ENCODE measurements at regions of chr12 and their contacts with region 1.

Region 1: DNA sequence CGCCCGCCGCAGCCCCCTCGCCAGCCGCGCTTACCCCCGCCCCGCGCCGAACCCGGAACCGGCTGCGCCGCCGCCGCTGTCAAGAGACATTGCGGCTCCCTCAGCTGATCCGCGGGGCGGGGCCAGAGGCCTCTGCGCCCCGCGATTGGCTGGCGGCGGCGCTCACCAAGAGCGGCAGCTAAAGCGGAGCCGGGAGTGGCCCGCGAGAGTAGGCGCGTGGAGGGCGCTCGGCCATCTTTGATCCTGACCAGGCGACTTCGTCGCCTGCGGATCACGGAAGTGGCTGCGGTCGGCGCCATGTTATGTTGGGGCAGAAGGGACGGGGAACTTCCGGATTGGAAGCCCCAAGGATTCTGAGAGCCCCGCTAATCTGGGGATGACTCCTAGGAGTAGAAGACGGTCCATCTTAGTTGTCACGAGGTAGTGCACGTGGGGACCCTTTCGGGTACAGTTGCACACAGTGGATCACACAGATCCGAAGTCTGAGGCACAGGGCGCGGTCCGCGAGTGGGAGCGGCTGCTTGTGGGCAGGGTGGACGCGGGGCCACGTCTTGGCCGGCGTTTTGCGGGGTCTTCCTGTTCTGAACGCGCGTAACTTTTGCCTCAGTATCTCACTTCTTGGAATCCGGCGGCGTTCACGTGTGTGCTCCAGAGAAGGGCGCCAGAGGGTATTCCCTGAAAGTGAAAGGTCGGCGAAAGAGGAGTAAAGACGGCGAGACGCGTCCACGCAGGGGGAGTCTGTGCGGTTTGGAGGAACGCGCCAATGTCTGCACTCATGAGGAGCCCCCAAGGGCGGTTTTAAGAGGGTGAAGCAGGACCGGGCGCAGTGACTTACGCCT is at the start of gene CHFR:
- DNase-seq: peak; percentile 86 to 98 (median 93)
- ATAC-seq: peak; percentile 98
- H3K4me3 ChIP-seq: peak within 1 kb of the TSS; percentile 79 to 86
- H3K4me3 Mint-ChIP-seq: peak within 1 kb of the TSS; percentile 97
- H3K27ac ChIP-seq: peak within 1 kb of the TSS; percentile 92 to 99
- H3K27ac Mint-ChIP-seq: peak within 1 kb of the TSS; percentile 100
- H3K4me1 ChIP-seq: peaks cover 23% of the 10 kb centered on the region
- H3K4me1 Mint-ChIP-seq: peaks cover 34% of the 10 kb centered on the region
- H3K27me3 ChIP-seq: no peaks in the 10 kb centered on the region
- H3K27me3 Mint-ChIP-seq: no peaks in the 10 kb centered on the region
- CTCF ChIP-seq: no peak
- total RNA-seq, gene CHFR: 70.6 to 81.1 TPM

Region 2: GRCh38 chr12:132710422-132711168 is 177.1 kb before region 1 on chr12 and contains the start of gene PGAM5:
- CTCF ChIA-PET with region 1: no interaction called
- POLR2A ChIA-PET with region 1: no interaction called
- intact Hi-C with region 1: loop called in 1 of 2 experiments (anchors 1 kb)
- DNase-seq: peak; percentile 81 to 98 (median 90)
- ATAC-seq: peak; percentile 97
- H3K4me3 ChIP-seq: peak within 1 kb of the TSS; percentile 68 to 69
- H3K4me3 Mint-ChIP-seq: peak within 1 kb of the TSS; percentile 87
- H3K27ac ChIP-seq: peak within 1 kb of the TSS; percentile 75 to 86
- H3K27ac Mint-ChIP-seq: peak within 1 kb of the TSS; percentile 94
- H3K4me1 ChIP-seq: peaks cover 21% of the 10 kb centered on the region
- H3K4me1 Mint-ChIP-seq: peaks cover 21% of the 10 kb centered on the region
- H3K27me3 ChIP-seq: no peaks in the 10 kb centered on the region
- H3K27me3 Mint-ChIP-seq: no peaks in the 10 kb centered on the region
- CTCF ChIP-seq: no peak
- total RNA-seq, gene PGAM5: 14.7 to 15.7 TPM

Region 3: DNA sequence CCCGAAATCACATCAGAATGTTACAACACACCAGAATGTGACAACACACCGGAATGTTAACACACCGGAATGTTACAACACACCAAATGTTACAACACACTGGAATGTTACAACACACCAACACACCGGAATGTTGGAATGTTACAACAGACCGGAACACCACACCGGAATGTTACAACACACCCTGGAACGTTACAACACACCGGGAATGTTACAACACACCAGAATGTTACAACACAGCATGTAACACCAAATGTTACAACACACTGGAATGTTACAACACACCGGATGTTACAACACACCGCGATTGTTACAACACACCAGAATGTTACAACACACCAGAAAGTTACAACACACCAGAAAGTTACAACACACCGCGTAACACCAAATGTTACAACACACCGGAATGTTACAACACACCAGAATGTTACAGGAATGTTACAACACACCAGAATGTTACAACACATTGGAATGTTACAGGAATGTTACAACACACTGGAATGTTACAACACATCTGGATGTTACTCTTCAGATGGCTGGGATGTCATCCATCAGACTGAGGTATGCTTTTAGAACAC is 21.4 kb before region 1 on chr12:
- CTCF ChIA-PET with region 1: no interaction called
- POLR2A ChIA-PET with region 1: interaction called, 7 read pairs
- intact Hi-C with region 1: loop called (anchors 1 to 2 kb)
- DNase-seq: no peak
- ATAC-seq: no peak
- H3K4me3 ChIP-seq: no peak overlapping the region
- H3K4me3 Mint-ChIP-seq: no peak overlapping the region
- H3K27ac ChIP-seq: peak overlapping the region in 1 of 2 experiments; percentile 8
- H3K27ac Mint-ChIP-seq: peak overlapping the region; percentile 86
- H3K4me1 ChIP-seq: peaks cover 24% of the 10 kb centered on the region
- H3K4me1 Mint-ChIP-seq: peaks cover 26% of the 10 kb centered on the region
- H3K27me3 ChIP-seq: no peaks in the 10 kb centered on the region
- H3K27me3 Mint-ChIP-seq: no peaks in the 10 kb centered on the region
- CTCF ChIP-seq: no peak

Region 4: GRCh38 chr12:132956011-132956788 is 68.5 kb after region 1 on chr12 and contains the start of gene ZNF605:
- CTCF ChIA-PET with region 1: interaction called, 3 read pairs
- POLR2A ChIA-PET with region 1: no interaction called
- intact Hi-C with region 1: loop called in 1 of 2 experiments (anchors 1 kb)
- DNase-seq: peak; percentile 70 to 95 (median 86)
- ATAC-seq: peak; percentile 93
- H3K4me3 ChIP-seq: peak within 1 kb of the TSS; percentile 94 to 100
- H3K4me3 Mint-ChIP-seq: peak within 1 kb of the TSS; percentile 96
- H3K27ac ChIP-seq: peak within 1 kb of the TSS; percentile 78 to 86
- H3K27ac Mint-ChIP-seq: peak within 1 kb of the TSS; percentile 91
- H3K4me1 ChIP-seq: peaks cover 22% of the 10 kb centered on the region
- H3K4me1 Mint-ChIP-seq: peaks cover 32% of the 10 kb centered on the region
- H3K27me3 ChIP-seq: no peaks in the 10 kb centered on the region
- H3K27me3 Mint-ChIP-seq: no peaks in the 10 kb centered on the region
- CTCF ChIP-seq: no peak
- total RNA-seq, gene ZNF605: 5.0 TPM

Region 5: DNA sequence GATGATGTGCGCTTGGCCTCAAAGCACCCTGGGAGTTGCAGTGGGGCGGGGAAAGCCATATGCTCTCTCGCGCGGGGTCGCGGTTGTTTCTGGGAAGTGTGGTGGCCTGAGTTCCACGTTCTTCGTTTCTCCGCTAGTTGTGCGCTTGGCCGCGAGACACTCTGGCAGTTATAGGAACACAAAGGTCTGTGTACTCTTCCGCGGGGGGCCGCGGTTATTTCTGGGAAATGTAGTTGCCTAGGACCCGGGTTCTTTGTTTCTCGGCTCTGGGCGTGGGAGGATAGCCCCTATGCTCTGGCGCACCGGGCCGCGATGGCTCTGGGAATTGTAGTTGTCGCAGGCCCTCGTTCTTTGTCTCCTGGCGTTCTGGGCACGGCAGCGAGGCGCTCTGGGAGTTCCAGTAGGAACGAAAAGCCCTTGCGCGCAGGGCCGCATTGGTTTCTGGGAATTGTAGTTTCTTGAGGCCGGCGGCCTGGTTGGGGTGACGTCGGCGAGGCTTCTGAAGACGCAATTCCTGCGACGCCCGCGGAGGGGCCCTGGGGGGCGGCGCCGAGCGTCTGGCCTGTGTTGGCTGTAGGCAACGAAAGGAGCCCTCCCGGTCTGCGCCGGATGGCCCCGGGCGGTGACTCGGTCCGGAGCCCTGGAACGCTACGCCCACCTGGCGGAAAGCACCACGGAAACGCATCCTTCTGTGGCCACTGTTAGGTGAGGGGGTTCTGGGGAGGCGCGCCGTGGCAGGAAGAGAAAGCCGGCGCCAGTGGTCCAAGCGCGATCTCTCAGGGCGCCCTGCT is 192.8 kb after region 1 on chr12 and contains the start of gene ZNF140:
- CTCF ChIA-PET with region 1: no interaction called
- POLR2A ChIA-PET with region 1: interaction called, 4 read pairs
- intact Hi-C with region 1: loop called in 1 of 2 experiments (anchors 1 kb)
- DNase-seq: peak; percentile 87 to 98 (median 94)
- ATAC-seq: peak; percentile 57
- H3K4me3 ChIP-seq: peak within 1 kb of the TSS; percentile 87 to 92
- H3K4me3 Mint-ChIP-seq: no peak within 1 kb of the TSS
- H3K27ac ChIP-seq: peak within 1 kb of the TSS; percentile 98 to 99
- H3K27ac Mint-ChIP-seq: no peak within 1 kb of the TSS
- H3K4me1 ChIP-seq: peaks cover 15% of the 10 kb centered on the region
- H3K4me1 Mint-ChIP-seq: peaks cover 17% of the 10 kb centered on the region
- H3K27me3 ChIP-seq: no peaks in the 10 kb centered on the region
- H3K27me3 Mint-ChIP-seq: no peaks in the 10 kb centered on the region
- CTCF ChIP-seq: peak; percentile 33
- total RNA-seq, gene ZNF140: 9.1 to 9.4 TPM

Measured in CD8-positive, alpha-beta T cell (primary cell).